IMR-90 (cell line): ENCODE measurements at regions of chr13 and their contacts with region 1.

Region 1: DNA sequence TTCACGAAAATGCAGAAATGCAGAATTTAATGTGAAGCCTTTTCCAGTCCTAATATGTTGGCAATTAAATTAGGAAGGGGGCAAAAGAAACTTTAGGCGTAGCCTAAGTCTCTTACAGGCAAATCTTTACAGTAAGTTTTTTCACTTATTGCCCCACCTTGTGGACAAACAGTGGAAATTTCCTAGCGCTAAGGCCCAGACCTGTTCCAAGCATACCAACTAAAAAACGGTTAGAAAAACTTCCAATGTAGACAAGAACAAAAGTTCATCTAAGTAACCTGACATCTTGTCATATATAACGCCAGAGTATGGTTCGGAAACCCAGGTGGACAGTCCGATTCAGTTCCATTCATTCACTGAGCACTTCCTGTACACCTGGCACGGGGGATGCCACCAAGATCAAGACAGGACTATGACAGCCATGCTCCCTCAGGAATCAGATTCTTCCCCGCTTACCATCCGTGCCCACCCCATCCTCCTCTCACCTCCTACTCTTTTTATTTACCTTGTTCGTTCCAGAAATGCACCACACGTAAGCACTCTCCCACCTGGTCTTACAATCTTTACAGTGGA is 4.9 kb downstream of the ZAR1L start:
- DNase-seq: peak; percentile 72
- ATAC-seq: peak; percentile 96
- H3K4me3 ChIP-seq: no peak overlapping the region
- H3K27ac ChIP-seq: peak overlapping the region; percentile 7; the same call in 1 of the 2 replicates
- H3K4me1 ChIP-seq: peaks cover 8% of the 10 kb centered on the region
- H3K27me3 ChIP-seq: no peaks in the 10 kb centered on the region
- CTCF ChIP-seq: peak; percentile 78
- POLR2A ChIP-seq: no peak
- RAD21 ChIP-seq: peak; percentile 73

Region 2: DNA sequence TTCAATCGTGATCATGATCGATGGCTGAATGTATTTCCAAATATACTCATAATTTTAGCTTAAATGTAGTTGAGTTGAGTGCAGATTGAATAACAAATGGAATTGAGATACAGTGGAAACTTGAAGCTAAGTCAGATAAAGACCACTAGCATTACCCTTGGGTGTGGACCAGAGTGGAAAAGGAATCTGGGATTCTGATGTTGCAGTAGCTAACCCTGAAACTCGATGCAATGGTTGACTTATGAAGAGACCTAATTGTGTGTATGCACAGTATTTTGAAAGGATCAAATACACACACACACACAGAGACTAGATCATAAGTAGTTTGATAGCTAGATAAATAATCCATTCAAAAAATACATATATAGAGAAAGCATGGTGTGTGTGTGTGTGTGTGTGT is 435.1 kb before region 1 on chr13:
- CTCF ChIA-PET with region 1: no interaction called
- POLR2A ChIA-PET with region 1: no interaction called
- dilution Hi-C with region 1: no loop called
- in situ Hi-C with region 1: no loop called
- intact Hi-C with region 1: no loop called
- DNase-seq: no peak
- ATAC-seq: no peak
- H3K4me3 ChIP-seq: no peak overlapping the region
- H3K27ac ChIP-seq: no peak overlapping the region
- H3K4me1 ChIP-seq: no peaks in the 10 kb centered on the region
- H3K27me3 ChIP-seq: peaks cover 2% of the 10 kb centered on the region
- CTCF ChIP-seq: no peak
- POLR2A ChIP-seq: no peak
- RAD21 ChIP-seq: no peak

Region 3: DNA sequence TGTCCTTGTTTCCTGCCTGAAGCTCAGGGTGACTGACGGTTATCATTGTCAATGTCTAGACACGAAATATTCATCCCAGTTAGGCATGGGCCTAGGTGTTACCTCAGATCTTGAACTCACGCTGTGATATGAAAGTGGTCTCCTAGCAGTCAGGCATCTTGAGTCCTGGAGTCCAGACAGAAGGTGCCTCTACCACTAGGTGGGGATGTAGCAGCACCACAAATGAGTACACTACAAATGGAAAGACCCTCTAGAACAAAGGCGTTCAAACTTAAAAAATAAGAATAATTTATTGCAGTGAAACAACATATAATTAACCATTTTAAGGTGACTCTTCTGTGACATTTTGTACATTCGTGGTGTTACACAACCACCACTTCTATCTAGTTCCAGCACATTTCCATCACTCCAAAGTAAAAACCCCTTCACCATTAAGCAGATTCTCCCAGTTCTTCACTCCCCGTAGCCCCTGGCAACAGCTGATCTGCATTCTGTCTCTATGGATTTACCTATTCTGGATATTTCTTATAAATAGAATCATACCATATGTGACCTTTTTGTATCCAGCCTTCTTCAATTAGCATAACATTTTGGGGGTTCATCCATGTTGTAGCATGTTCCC is 290.5 kb before region 1 on chr13:
- CTCF ChIA-PET with region 1: no interaction called
- POLR2A ChIA-PET with region 1: no interaction called
- dilution Hi-C with region 1: no loop called
- in situ Hi-C with region 1: loop called (anchors 5 kb)
- intact Hi-C with region 1: loop called (anchors 1 kb)
- DNase-seq: peak; percentile 81
- ATAC-seq: peak; percentile 87
- H3K4me3 ChIP-seq: no peak overlapping the region
- H3K27ac ChIP-seq: no peak overlapping the region
- H3K4me1 ChIP-seq: peaks cover 5% of the 10 kb centered on the region; the same call in 1 of the 2 replicates
- H3K27me3 ChIP-seq: peaks cover 1% of the 10 kb centered on the region; the same call in 1 of the 2 replicates
- CTCF ChIP-seq: peak; percentile 84
- POLR2A ChIP-seq: no peak
- RAD21 ChIP-seq: peak; percentile 82

Region 4: GRCh38 chr13:32031025-32031814 is 279.0 kb before region 1 on chr13 and contains the start of gene FRY:
- CTCF ChIA-PET with region 1: interaction called, 3 read pairs
- POLR2A ChIA-PET with region 1: no interaction called
- dilution Hi-C with region 1: no loop called
- in situ Hi-C with region 1: no loop called
- intact Hi-C with region 1: loop called (anchors 5 kb)
- DNase-seq: peak; percentile 58
- ATAC-seq: peak; percentile 89
- H3K4me3 ChIP-seq: peak within 1 kb of the TSS; percentile 65
- H3K27ac ChIP-seq: peak within 1 kb of the TSS; percentile 56
- H3K4me1 ChIP-seq: peaks cover 8% of the 10 kb centered on the region
- H3K27me3 ChIP-seq: no peaks in the 10 kb centered on the region
- CTCF ChIP-seq: 0 out of 2 replicates have a peak, but pooled peaks have one; percentile 2
- POLR2A ChIP-seq: no peak
- RAD21 ChIP-seq: no peak; the same call in 1 of the 2 replicates
- total RNA-seq, gene FRY: 3.0 and 4.2 TPM in 2 replicates

Region 5: GRCh38 chr13:32164622-32165268 is 145.5 kb before region 1 on chr13:
- CTCF ChIA-PET with region 1: no interaction called
- POLR2A ChIA-PET with region 1: no interaction called
- dilution Hi-C with region 1: no loop called
- in situ Hi-C with region 1: no loop called
- intact Hi-C with region 1: loop called (anchors 5 kb)
- DNase-seq: peak; percentile 66
- ATAC-seq: peak; percentile 69
- H3K4me3 ChIP-seq: no peak overlapping the region
- H3K27ac ChIP-seq: peak overlapping the region; percentile 41; the same call in 1 of the 2 replicates
- H3K4me1 ChIP-seq: peaks cover 8% of the 10 kb centered on the region
- H3K27me3 ChIP-seq: no peaks in the 10 kb centered on the region
- CTCF ChIP-seq: peak; percentile 56
- POLR2A ChIP-seq: no peak
- RAD21 ChIP-seq: peak; percentile 55

Region 6: DNA sequence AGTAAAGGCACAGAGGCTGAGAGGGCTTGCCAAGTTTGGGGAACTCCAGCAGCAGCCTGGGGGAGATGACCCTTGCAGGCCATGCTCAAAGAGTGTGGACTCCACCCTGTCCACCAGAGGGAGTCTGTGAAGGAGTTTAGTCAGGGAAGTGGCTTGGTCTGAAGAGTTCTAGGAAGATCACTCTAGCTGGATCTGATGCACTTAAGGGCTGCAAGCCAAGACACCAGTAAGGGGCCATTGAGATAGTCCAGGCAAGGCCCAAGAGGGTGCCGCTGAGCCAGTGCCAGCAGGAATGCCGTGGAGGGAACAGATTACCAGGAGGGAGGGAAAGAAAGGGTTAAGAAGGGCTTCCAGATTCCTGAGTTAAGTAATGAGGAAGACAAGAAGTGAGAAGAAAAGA is 63.8 kb before region 1 on chr13:
- CTCF ChIA-PET with region 1: interaction called, 4 read pairs
- POLR2A ChIA-PET with region 1: no interaction called
- dilution Hi-C with region 1: no loop called
- in situ Hi-C with region 1: no loop called
- intact Hi-C with region 1: loop called (anchors 1 kb)
- DNase-seq: peak; percentile 76
- ATAC-seq: peak; percentile 96
- H3K4me3 ChIP-seq: no peak overlapping the region
- H3K27ac ChIP-seq: no peak overlapping the region
- H3K4me1 ChIP-seq: peaks cover 3% of the 10 kb centered on the region
- H3K27me3 ChIP-seq: no peaks in the 10 kb centered on the region
- CTCF ChIP-seq: peak; percentile 75
- POLR2A ChIP-seq: no peak
- RAD21 ChIP-seq: peak; percentile 75

Region 7: GRCh38 chr13:32261567-32261966 is 48.7 kb before region 1 on chr13:
- CTCF ChIA-PET with region 1: no interaction called
- POLR2A ChIA-PET with region 1: no interaction called
- dilution Hi-C with region 1: no loop called
- in situ Hi-C with region 1: no loop called
- intact Hi-C with region 1: loop called (anchors 5 kb)
- DNase-seq: peak; percentile 92
- ATAC-seq: peak; percentile 78
- H3K4me3 ChIP-seq: no peak overlapping the region
- H3K27ac ChIP-seq: peak overlapping the region; percentile 48; the same call in 1 of the 2 replicates
- H3K4me1 ChIP-seq: peaks cover 13% of the 10 kb centered on the region
- H3K27me3 ChIP-seq: no peaks in the 10 kb centered on the region
- CTCF ChIP-seq: no peak
- POLR2A ChIP-seq: no peak
- RAD21 ChIP-seq: no peak

Region 8: DNA sequence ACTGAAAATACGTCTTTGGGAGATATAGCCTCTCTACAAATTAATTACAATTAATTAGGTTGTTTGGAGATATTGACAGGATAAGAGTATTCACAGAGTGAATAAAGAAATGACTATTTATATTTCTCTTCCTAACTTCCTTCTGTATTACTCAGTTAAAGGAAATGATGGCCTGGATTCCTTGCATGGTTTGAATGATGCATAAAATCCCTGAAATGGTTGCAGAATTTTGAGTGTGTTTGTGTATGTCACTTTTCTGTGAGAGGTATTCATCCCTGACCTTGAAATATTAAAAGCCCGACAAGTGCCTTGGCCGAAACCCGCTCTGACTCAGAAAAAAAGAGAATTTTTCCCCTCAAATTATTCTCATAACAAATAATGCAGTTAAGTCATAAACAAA is 366.0 kb after region 1 on chr13:
- CTCF ChIA-PET with region 1: no interaction called
- POLR2A ChIA-PET with region 1: no interaction called
- dilution Hi-C with region 1: no loop called
- in situ Hi-C with region 1: no loop called
- intact Hi-C with region 1: no loop called
- DNase-seq: peak; percentile 50
- ATAC-seq: peak; percentile 74
- H3K4me3 ChIP-seq: no peak overlapping the region
- H3K27ac ChIP-seq: no peak overlapping the region
- H3K4me1 ChIP-seq: no peaks in the 10 kb centered on the region
- H3K27me3 ChIP-seq: no peaks in the 10 kb centered on the region
- CTCF ChIP-seq: no peak
- POLR2A ChIP-seq: no peak
- RAD21 ChIP-seq: no peak

Region 9: DNA sequence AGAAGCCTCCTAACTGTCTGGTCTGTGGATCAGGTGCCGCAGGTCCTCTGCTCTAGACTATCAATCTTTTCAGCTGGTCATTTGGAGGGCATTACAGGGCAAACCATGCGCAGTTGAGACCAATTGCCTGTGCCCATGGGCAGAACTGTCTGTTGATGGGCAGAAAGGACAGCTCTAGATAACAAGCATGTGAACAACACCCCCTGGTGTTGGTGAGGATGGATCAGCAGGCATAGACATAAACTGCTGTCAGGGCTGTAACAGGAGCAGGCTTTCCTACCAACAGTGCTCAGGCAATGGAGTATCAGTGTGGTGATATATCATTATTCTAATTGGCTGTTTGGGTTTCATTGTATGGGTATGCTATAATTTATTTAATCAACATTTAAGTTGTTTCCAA is 601.3 kb after region 1 on chr13:
- CTCF ChIA-PET with region 1: no interaction called
- POLR2A ChIA-PET with region 1: no interaction called
- dilution Hi-C with region 1: no loop called
- in situ Hi-C with region 1: no loop called
- intact Hi-C with region 1: no loop called
- DNase-seq: peak; percentile 57
- ATAC-seq: peak; percentile 92
- H3K4me3 ChIP-seq: no peak overlapping the region
- H3K27ac ChIP-seq: no peak overlapping the region
- H3K4me1 ChIP-seq: no peaks in the 10 kb centered on the region
- H3K27me3 ChIP-seq: no peaks in the 10 kb centered on the region
- CTCF ChIP-seq: peak; percentile 52
- POLR2A ChIP-seq: no peak
- RAD21 ChIP-seq: peak; percentile 63